Transverse colon (tissue), 4 donors: ENCODE measurements at regions of chr1 and their contacts with region 1.

Region 1: DNA sequence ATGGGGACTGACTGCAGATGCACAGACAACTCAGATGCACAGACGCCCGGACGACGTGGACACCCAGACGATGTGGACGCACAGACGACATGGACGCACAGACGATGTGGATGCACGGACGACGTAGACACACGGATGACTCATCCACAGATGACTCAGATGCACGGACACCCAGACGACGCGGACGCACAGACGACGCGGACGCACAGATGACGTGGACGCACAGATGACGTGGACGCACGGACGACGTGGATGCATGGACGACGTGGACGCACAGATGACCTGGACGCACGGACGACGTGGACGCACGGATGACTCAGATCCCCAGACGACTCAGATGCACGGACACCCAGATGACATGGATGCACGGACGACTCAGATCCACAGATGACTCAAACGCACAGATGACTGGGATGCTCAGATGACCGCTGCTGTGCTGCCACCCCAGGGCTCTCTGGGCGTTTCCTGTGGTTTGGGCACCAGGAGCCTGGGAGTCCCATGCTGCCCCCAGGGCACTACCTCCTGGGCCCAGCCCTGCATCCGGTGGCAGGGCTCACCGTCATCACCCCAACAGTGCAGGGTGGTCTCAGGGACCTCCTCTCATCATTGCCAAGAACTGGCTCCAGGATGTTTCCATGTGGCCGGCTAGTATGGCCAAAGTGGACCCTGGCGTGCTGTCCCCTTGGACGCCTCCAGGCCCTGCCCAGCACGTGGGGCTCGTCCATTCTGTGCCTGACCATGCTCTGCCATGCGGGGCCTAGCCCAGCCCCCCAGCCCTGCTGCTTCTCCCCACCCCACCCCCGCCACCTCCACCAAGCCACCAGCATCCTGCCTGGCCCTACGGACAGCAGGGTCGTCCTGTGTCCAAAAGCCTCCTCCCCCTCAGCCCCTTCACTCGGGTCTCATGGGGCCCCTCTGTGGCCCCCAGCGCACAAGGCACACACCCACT is 14.0 kb downstream of the FAAP20 start:
- DNase-seq: no peak
- H3K4me3 ChIP-seq: no peak overlapping the region
- H3K27ac ChIP-seq: no peak overlapping the region
- H3K4me1 ChIP-seq: no peaks in the 10 kb centered on the region
- H3K27me3 ChIP-seq: no peaks in the 10 kb centered on the region
- CTCF ChIP-seq: no peak
- EP300 ChIP-seq: no peak
- POLR2A ChIP-seq: no peak

Region 2: DNA sequence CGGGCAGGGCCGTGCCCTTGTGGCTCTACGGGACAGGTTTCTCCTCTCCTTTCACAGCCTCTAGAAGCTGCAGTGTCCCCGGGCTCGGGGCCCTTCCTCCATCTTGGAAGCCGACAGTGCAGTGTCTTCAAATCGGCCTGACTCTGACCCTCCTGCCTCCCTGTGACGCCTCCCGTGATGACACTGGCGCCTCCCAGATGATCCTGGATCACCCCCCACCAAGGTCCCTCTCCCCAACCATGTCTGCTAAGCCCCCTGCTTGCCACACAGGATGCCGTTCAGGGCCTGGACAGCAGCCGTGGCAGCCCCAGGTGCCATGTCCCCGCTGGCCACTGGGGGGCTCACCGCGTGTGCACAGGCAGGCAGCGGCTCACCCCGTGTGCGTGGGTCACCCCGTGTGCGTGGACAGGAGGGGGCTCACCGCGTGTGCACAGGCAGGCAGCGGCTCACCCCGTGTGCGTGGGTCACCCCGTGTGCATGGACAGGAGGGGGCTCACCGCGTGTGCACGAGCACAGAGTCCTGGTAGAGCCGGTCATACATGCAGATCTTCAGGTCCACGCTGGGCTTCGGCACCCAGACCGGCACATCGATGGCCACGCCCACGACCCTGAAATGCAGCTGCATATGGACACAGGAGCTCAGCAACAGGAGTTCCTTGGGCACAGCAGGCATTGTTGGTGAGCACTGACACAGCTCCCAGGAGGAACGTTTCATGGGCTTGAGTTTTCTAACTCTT is 236.6 kb before region 1 on chr1:
- in situ Hi-C with region 1: no loop called
- intact Hi-C with region 1: no loop called
- DNase-seq: peak; percentile 54
- H3K4me3 ChIP-seq: peak overlapping the region in 1 of 4 donors; percentile 17
- H3K27ac ChIP-seq: no peak overlapping the region
- H3K4me1 ChIP-seq: peaks cover 0 to 16% (median 11%) of the 10 kb centered on the region in 4 donors
- H3K27me3 ChIP-seq: peaks cover 26% of the 10 kb centered on the region
- CTCF ChIP-seq: peak; percentile 86 to 91 (median 89)
- EP300 ChIP-seq: no peak
- POLR2A ChIP-seq: no peak

Region 3: GRCh38 chr1:2143814-2144500 is 36.6 kb before region 1 on chr1:
- in situ Hi-C with region 1: no loop called
- intact Hi-C with region 1: loop called (anchors 5 kb)
- DNase-seq: no peak
- H3K4me3 ChIP-seq: no peak overlapping the region
- H3K27ac ChIP-seq: no peak overlapping the region
- H3K4me1 ChIP-seq: peaks cover 0 to 8% (median 5%) of the 10 kb centered on the region in 4 donors
- H3K27me3 ChIP-seq: no peaks in the 10 kb centered on the region
- CTCF ChIP-seq: no peak
- EP300 ChIP-seq: no peak
- POLR2A ChIP-seq: no peak

Region 4: DNA sequence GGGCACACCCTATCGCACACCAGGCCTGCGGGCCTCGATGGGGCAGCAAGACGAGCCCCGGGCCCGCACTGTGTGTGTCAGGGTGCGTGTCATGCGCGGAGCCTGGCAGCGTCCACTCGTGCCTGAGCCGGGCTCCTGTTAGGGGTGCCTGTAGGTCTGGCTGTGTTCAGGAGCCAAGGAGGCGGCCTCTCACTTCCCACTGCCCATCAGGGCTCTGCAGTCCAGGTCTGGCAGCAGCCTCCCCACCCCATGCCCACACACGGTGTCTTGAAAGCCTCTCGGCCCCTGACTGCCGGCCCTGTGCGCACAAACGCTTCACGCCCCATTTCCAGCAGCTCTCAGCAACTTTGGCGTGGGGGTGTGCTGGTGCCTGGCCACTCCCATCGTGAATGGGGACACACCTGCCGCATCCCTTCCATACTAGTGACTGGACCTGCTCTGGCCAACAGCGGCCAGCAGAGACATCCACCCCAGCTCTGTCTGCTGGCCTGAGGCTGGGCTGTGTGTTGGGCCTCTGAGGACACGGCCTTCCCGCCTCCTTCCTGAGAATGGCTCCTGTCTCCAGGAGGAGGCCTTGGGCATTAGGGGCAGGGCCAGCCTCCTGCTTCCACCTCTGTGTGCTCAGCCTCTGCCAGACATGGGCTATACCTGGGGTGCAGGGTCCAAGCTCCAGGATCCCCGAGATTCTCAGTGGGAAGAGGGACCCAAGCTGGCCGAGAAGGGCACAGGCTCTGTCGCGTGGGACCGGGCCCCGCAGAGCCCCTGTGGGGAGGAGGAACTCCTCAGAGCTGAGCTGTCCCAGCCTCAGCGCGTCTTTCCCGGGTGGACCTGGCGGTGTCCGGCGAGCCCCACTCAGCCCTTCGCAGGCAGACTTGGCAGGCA is 798.9 kb after region 1 on chr1:
- in situ Hi-C with region 1: no loop called
- intact Hi-C with region 1: no loop called
- DNase-seq: no peak
- H3K4me3 ChIP-seq: no peak overlapping the region
- H3K27ac ChIP-seq: no peak overlapping the region
- H3K4me1 ChIP-seq: no peaks in the 10 kb centered on the region
- H3K27me3 ChIP-seq: no peaks in the 10 kb centered on the region
- CTCF ChIP-seq: no peak
- EP300 ChIP-seq: no peak
- POLR2A ChIP-seq: no peak